ENCODE measurements at regions of chr7 and their contacts with region 1.

Region 1: GRCh38 chr7:1473864-1474512 is 14.7 kb upstream of the MICALL2 start:
- DNase-seq: peak; percentile 72
- ATAC-seq: peak; percentile 80
- H3K4me3 ChIP-seq: no peak overlapping the region
- H3K27ac ChIP-seq: peak overlapping the region; percentile 62; the same call in 1 of the 2 replicates
- H3K4me1 ChIP-seq: peaks cover 3 to 13% of the 10 kb centered on the region in 2 experiments; a peak in 3 of 4 replicates
- H3K27me3 ChIP-seq: no peaks in the 10 kb centered on the region
- CTCF ChIP-seq: peak; percentile 71 to 84 (median 82); a peak in 5 of 6 replicates
- POLR2A ChIP-seq: no peak
- RAD21 ChIP-seq: peak; percentile 94

Region 2: DNA sequence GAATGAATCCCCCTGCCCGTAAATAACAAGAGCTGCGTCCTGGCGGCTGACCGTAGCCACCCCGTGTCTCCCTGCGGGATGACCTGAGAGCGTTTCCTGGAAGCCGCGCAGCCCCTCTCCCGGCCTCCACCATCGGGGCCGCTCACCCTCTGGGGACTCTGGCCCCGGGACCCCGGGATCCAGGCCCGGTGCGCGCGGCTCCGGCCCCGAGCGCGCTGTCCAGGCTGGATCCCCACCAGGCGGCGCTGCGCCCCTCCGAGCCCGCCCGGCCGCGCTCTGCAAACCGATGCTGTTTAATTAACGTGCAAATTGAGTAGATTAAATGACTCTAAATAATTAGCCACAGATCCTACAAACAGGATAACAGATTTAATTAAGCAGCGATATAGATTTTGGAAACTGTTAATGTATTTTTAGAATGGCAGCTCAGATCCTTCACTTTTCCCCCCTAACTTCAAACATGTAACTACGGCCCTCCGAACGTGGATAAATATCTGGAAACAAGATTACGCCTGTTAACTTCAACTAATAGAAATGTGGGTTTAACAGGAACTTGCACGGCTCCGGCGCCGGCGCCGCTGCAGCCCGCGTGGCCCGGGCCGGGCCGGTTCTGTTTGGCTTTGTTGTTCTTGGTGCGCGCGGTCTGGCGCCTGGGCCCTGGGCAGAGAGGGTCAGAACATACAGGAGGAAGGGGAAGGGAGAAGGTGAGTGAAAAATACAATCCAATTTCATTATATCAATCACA is 248.4 kb before region 1 on chr7:
- CTCF ChIA-PET with region 1: interaction called, 4 read pairs
- POLR2A ChIA-PET with region 1: no interaction called
- RAD21 ChIA-PET with region 1: interaction called in 1 of 2 experiments, 4 read pairs
- intact Hi-C with region 1: loop called (anchors 1 kb)
- DNase-seq: no peak
- ATAC-seq: peak; percentile 95
- H3K4me3 ChIP-seq: no peak overlapping the region
- H3K27ac ChIP-seq: no peak overlapping the region
- H3K4me1 ChIP-seq: no peaks in the 10 kb centered on the region
- H3K27me3 ChIP-seq: no peaks in the 10 kb centered on the region
- CTCF ChIP-seq: peak; percentile 87 to 94 (median 89)
- POLR2A ChIP-seq: no peak
- RAD21 ChIP-seq: peak; percentile 92

Region 3: GRCh38 chr7:1432411-1433082 is 41.4 kb before region 1 on chr7:
- CTCF ChIA-PET with region 1: interaction called, 6 read pairs
- POLR2A ChIA-PET with region 1: no interaction called
- RAD21 ChIA-PET with region 1: interaction called in 1 of 2 experiments, 4 read pairs
- intact Hi-C with region 1: loop called (anchors 1 kb)
- DNase-seq: peak; percentile 21
- ATAC-seq: peak; percentile 83
- H3K4me3 ChIP-seq: no peak overlapping the region
- H3K27ac ChIP-seq: no peak overlapping the region
- H3K4me1 ChIP-seq: peaks cover 0 to 9% of the 10 kb centered on the region in 2 experiments; a peak in 2 of 4 replicates
- H3K27me3 ChIP-seq: no peaks in the 10 kb centered on the region
- CTCF ChIP-seq: peak; percentile 79 to 98 (median 94)
- POLR2A ChIP-seq: no peak
- RAD21 ChIP-seq: peak; percentile 79

Region 4: GRCh38 chr7:1460821-1461645 is 13.0 kb before region 1 on chr7:
- CTCF ChIA-PET with region 1: interaction called, 14 read pairs
- POLR2A ChIA-PET with region 1: no interaction called
- RAD21 ChIA-PET with region 1: interaction called in 1 of 2 experiments, 3 read pairs
- intact Hi-C with region 1: no loop called
- DNase-seq: no peak
- ATAC-seq: no peak
- H3K4me3 ChIP-seq: no peak overlapping the region
- H3K27ac ChIP-seq: peak overlapping the region; percentile 83
- H3K4me1 ChIP-seq: peaks cover 60 to 72% of the 10 kb centered on the region in 2 experiments
- H3K27me3 ChIP-seq: no peaks in the 10 kb centered on the region
- CTCF ChIP-seq: no peak
- POLR2A ChIP-seq: no peak
- RAD21 ChIP-seq: no peak

Region 5: GRCh38 chr7:1607696-1608095 is 133.7 kb after region 1 on chr7:
- CTCF ChIA-PET with region 1: no interaction called
- POLR2A ChIA-PET with region 1: no interaction called
- RAD21 ChIA-PET with region 1: no interaction called
- intact Hi-C with region 1: no loop called
- DNase-seq: no peak
- ATAC-seq: no peak; the same call in 1 of the 2 replicates
- H3K4me3 ChIP-seq: no peak overlapping the region
- H3K27ac ChIP-seq: no peak overlapping the region
- H3K4me1 ChIP-seq: peaks cover 3 to 12% of the 10 kb centered on the region in 2 experiments; a peak in 3 of 4 replicates
- H3K27me3 ChIP-seq: no peaks in the 10 kb centered on the region
- CTCF ChIP-seq: no peak
- POLR2A ChIP-seq: no peak
- RAD21 ChIP-seq: no peak

Region 6: GRCh38 chr7:2072042-2072441 is 598.1 kb after region 1 on chr7:
- CTCF ChIA-PET with region 1: no interaction called
- POLR2A ChIA-PET with region 1: no interaction called
- RAD21 ChIA-PET with region 1: no interaction called
- intact Hi-C with region 1: no loop called
- DNase-seq: no peak
- ATAC-seq: no peak
- H3K4me3 ChIP-seq: no peak overlapping the region
- H3K27ac ChIP-seq: no peak overlapping the region
- H3K4me1 ChIP-seq: no peaks in the 10 kb centered on the region
- H3K27me3 ChIP-seq: no peaks in the 10 kb centered on the region
- CTCF ChIP-seq: no peak
- POLR2A ChIP-seq: no peak
- RAD21 ChIP-seq: no peak

Measured in HCT116 (cell line).